Tibial artery (tissue), 4 donors: ENCODE measurements at regions of chr22 and their contacts with region 1.

Region 1: DNA sequence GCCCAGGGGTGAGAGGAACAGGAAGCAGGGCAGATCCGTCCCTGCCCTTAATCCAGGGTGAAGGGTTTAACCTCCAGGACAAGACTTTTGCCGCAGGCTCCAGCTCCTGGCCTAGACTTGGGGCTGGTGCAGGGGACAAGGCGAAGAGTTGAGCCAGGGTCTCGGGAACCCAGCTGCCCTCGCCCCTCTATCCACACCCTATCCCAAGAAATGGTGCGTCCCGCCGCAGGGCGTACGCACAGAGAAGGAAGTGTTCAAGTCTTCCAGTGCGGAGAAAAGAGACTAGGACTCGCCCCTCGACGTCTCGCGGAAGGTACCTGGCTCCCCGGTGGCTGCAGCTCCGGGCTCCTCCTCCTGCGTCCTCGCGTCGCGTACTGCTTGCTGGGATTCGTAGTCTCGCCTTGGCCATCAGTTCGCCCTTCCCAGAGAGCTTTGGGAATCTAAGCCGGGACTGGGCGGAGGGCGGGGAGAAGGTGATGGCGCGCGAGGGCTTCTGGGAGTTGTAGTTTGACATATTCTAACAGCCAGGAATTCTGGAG is at the start of gene ZMAT5:
- DNase-seq: peak; percentile 95 to 97
- H3K4me3 ChIP-seq: peak within 1 kb of the TSS; percentile 86 to 94
- H3K27ac ChIP-seq: peak within 1 kb of the TSS; percentile 84 to 92
- H3K4me1 ChIP-seq: peaks cover 0 to 27% (median 16%) of the 10 kb centered on the region in 4 donors
- H3K27me3 ChIP-seq: no peaks in the 10 kb centered on the region
- CTCF ChIP-seq: no peak

Region 2: GRCh38 chr22:29587938-29588699 is 178.6 kb before region 1 on chr22:
- intact Hi-C with region 1: no loop called
- DNase-seq: no peak
- H3K4me3 ChIP-seq: no peak overlapping the region
- H3K27ac ChIP-seq: no peak overlapping the region
- H3K4me1 ChIP-seq: no peaks in the 10 kb centered on the region
- H3K27me3 ChIP-seq: no peaks in the 10 kb centered on the region
- CTCF ChIP-seq: no peak

Region 3: DNA sequence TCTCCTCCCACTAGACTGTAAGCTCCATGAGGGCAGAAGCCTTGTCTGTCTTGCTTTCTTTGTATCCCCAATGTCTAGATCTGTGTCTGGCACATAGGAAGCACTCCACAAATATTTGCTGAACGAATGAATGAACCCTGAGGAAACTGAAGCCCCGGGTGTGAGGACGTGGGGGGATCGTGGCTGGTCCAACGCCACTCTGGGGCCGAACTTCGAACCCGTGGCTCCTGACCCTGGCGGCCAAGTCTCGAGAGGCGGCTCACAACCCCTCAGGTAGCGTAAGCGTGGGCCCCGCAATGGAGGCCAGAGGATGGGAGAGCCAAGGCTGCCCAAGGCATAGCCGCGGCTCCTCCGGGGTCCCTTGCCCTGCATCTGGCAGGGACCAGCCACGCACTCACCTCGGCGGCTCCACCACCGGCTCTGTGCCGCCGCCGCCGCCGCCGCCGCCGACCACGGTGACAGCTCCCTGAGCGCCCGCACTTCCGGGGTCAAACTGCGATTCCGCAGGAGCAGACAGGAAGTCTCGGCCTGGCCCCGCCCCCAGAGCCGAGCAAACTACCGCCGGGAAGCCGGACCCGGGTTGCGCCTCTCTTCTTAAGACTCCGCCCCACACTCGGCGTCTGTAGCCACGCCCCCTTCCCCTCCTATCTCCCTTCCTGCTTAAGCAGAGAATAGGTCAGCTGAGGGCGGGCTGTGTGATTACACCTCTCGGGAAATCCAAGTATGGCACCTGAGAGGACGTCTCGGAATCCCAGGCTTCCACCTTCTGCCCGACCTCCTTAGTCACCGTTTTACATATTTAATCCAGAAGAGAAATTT is 71.3 kb after region 1 on chr22 and contains the start of gene ASCC2:
- intact Hi-C with region 1: loop called (anchors 5 kb)
- DNase-seq: peak; percentile 99
- H3K4me3 ChIP-seq: peak within 1 kb of the TSS; percentile 89 to 99
- H3K27ac ChIP-seq: peak within 1 kb of the TSS; percentile 66 to 83
- H3K4me1 ChIP-seq: peaks cover 0 to 22% (median 11%) of the 10 kb centered on the region in 4 donors
- H3K27me3 ChIP-seq: no peaks in the 10 kb centered on the region
- CTCF ChIP-seq: peak; percentile 25 to 28